Ovary (tissue), 10 donors: ENCODE measurements at regions of chr10 and their contacts with region 1.

Region 1: GRCh38 chr10:114519284-114519624 is 115.0 kb upstream of the AFAP1L2 start:
- DNase-seq: peak in 2 of 5 donors; percentile 36 to 62
- H3K4me3 ChIP-seq: no peak overlapping the region
- H3K27ac ChIP-seq: peak overlapping the region; percentile 67 to 73
- H3K4me1 ChIP-seq: peaks cover 34% of the 10 kb centered on the region
- H3K27me3 ChIP-seq: no peaks in the 10 kb centered on the region
- CTCF ChIP-seq: no peak
- EP300 ChIP-seq: no peak
- POLR2A ChIP-seq: no peak

Region 2: GRCh38 chr10:114477285-114477684 is 42.0 kb before region 1 on chr10:
- intact Hi-C with region 1: loop called in 1 of 4 experiments (anchors 5 kb)
- DNase-seq: peak; percentile 44 to 87 (median 77)
- H3K4me3 ChIP-seq: no peak overlapping the region
- H3K27ac ChIP-seq: peak overlapping the region; percentile 40 to 76
- H3K4me1 ChIP-seq: peaks cover 16% of the 10 kb centered on the region
- H3K27me3 ChIP-seq: no peaks in the 10 kb centered on the region
- CTCF ChIP-seq: no peak
- EP300 ChIP-seq: peak; percentile 43
- POLR2A ChIP-seq: peak; percentile 26

Region 3: DNA sequence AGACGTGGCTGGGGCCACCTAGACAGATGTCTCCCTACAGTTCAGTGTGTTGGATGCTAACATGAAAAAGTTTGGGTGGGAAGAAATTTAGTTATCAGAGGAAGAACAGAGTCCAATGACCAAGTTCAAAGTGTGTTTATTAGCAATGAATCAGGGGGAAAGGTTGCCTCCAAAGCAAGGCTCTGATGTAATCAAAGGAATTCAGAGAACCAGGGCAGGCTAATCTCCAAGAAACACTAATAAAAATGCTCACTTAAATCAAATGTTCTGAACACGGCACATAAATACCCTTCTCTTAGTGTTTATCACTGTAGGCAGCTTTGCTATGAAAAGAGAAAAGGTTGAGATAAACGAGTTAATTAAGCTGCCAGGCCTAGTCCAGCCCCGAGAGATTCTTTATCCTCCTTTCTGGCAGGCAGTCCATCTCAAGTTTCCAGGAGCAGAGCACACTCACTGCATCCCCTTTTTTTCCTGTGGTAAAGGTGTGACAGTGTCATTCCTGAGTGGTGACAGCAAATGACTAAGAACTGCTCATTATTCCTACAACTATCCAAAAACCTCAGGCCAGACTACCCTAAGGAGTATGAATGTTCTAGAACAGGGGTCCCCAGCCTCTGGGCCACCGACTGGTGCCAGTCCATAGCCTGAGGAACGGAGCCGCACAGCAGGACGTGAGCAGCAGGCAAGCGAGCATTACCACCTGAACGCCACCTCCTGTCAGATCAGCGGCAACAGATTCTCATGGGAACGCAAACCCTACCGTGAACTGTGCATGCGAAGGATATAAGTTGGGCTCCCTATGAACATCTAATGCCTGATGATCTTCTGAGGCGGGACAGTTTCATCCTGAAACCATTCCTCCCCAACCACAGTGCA is 235.4 kb after region 1 on chr10:
- intact Hi-C with region 1: no loop called
- DNase-seq: no peak
- H3K4me3 ChIP-seq: no peak overlapping the region
- H3K27ac ChIP-seq: no peak overlapping the region
- H3K4me1 ChIP-seq: no peaks in the 10 kb centered on the region
- H3K27me3 ChIP-seq: no peaks in the 10 kb centered on the region
- CTCF ChIP-seq: no peak
- EP300 ChIP-seq: no peak
- POLR2A ChIP-seq: no peak